Esophagus squamous epithelium (tissue), 5 donors: ENCODE measurements at regions of chr7 and their contacts with region 1.

Region 1: DNA sequence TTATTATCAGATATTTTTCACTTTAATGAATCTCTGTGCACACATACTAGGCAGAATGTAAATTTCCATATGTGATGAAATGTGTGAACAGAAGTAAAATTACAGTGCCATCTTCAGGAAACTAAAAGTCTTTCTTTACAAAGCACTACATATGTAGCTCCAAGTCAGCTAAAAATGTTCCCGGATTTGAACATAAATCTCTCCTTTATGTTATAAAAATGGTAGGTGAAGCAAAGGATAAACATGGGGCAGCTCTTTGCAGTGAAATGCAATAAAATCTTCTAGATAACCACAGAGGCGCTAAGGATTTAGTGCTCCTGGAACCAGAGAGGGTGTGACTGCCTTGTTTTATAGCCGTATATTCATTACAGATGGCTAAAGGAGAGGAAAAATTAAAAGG is 104.9 kb upstream of the C7orf33 start:
- DNase-seq: no peak
- H3K4me3 ChIP-seq: no peak overlapping the region
- H3K27ac ChIP-seq: no peak overlapping the region
- H3K4me1 ChIP-seq: peaks cover 0 to 13% (median 0%) of the 10 kb centered on the region in 3 donors
- H3K27me3 ChIP-seq: peaks cover 0 to 6% (median 0%) of the 10 kb centered on the region in 4 donors
- CTCF ChIP-seq: peak in 1 of 6 experiments; percentile 17
- POLR2A ChIP-seq: no peak

Region 2: GRCh38 chr7:148262721-148263229 is 222.8 kb before region 1 on chr7:
- intact Hi-C with region 1: loop called (anchors 10 kb)
- DNase-seq: no peak
- H3K4me3 ChIP-seq: peak overlapping the region in 1 of 4 donors; percentile 46
- H3K27ac ChIP-seq: no peak overlapping the region
- H3K4me1 ChIP-seq: peaks cover 0 to 8% (median 0%) of the 10 kb centered on the region in 3 donors
- H3K27me3 ChIP-seq: peaks cover 0 to 14% (median 0%) of the 10 kb centered on the region in 4 donors
- CTCF ChIP-seq: peak; percentile 80 to 93 (median 84)
- POLR2A ChIP-seq: no peak

Region 3: GRCh38 chr7:148645898-148646297 is 160.3 kb after region 1 on chr7:
- intact Hi-C with region 1: no loop called
- DNase-seq: no peak
- H3K4me3 ChIP-seq: no peak overlapping the region
- H3K27ac ChIP-seq: no peak overlapping the region
- H3K4me1 ChIP-seq: no peaks in the 10 kb centered on the region
- H3K27me3 ChIP-seq: peaks cover 0 to 11% (median 0%) of the 10 kb centered on the region in 4 donors
- CTCF ChIP-seq: no peak
- POLR2A ChIP-seq: no peak